Activated CD8-positive, alpha-beta T cell treated with anti-CD3 and anti-CD28 coated beads for 36 hours (primary cell): ENCODE measurements at regions of chr7 and their contacts with region 1.

Region 1: DNA sequence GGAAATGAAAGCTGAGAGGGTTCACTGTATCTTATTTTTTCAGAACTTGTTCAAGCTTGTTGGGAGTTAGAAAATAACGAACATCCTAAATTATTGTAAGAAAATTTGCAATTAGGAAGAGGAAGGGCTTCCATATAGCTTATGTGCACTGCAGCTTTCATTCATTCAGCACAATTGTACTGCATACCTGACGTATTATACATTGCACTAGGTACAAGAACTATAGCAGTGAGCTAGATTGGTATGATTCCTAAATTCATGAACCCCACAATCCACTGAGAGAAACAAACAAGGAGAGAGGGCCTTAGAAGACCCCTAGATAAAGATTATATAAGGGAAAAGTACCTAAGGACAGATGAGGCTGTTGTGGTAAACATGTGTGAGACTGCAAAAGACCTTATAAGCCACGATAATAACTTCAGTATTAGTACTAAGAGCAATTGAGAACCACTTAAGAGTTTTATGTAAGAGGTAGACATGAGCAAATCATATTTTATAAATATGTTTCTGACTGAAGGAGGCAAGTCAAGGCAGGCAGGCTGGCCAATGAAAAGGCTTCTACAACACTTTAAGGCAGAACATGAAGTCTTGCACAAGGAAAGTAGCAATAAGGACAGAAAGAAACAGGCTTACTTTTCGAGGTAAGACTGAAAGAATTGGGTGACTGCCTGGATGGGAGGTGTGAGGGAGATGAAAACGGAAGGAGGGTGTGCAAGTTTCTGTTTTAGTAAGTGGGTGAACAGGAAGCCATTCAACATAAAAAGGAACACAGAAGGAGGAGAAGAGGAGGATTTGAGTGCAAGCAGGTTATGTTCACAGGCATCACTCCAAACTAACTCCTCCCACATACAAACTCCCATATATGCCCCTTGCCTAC is 77.9 kb upstream of the LRRN3 start:
- DNase-seq: peak; percentile 69
- ATAC-seq: peak; percentile 86
- H3K4me3 Mint-ChIP-seq: peak overlapping the region; percentile 66
- H3K27ac Mint-ChIP-seq: peak overlapping the region; percentile 91
- H3K4me1 Mint-ChIP-seq: peaks cover 67% of the 10 kb centered on the region
- H3K27me3 Mint-ChIP-seq: no peaks in the 10 kb centered on the region
- CTCF ChIP-seq: no peak

Region 2: DNA sequence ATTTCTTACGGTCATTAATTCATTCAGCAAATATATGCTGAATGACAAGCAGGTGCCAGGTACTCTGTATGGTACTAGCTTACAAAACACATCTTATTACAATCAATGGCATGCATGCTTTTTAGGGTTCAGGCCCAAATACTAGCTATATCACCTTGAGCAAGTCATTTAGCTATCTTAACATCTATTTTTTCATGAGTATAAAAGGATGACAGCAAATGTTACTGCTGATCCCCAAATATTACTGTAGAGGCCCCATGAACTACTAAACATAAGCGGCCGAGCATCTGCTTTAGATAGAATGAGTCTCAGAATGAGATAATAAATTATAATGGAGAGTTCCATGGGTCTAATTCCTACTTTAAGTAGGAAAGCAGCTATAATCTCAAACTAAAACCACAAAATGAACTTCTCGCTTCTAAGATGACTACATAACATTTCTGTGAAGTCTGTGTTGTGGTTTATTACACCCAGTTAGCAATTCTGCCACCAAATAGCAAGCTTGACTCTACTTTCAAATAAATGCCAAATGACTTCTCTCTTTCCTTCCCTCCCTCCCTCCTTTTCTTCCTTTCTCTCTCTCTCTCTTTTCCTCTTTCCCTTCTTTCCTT is 35.8 kb before region 1 on chr7:
- CTCF ChIA-PET with region 1: no interaction called
- POLR2A ChIA-PET with region 1: no interaction called
- intact Hi-C with region 1: loop called (anchors 2 kb)
- DNase-seq: no peak
- ATAC-seq: peak; percentile 77
- H3K4me3 Mint-ChIP-seq: peak overlapping the region; percentile 48
- H3K27ac Mint-ChIP-seq: peak overlapping the region; percentile 83
- H3K4me1 Mint-ChIP-seq: peaks cover 47% of the 10 kb centered on the region
- H3K27me3 Mint-ChIP-seq: no peaks in the 10 kb centered on the region
- CTCF ChIP-seq: no peak

Region 3: DNA sequence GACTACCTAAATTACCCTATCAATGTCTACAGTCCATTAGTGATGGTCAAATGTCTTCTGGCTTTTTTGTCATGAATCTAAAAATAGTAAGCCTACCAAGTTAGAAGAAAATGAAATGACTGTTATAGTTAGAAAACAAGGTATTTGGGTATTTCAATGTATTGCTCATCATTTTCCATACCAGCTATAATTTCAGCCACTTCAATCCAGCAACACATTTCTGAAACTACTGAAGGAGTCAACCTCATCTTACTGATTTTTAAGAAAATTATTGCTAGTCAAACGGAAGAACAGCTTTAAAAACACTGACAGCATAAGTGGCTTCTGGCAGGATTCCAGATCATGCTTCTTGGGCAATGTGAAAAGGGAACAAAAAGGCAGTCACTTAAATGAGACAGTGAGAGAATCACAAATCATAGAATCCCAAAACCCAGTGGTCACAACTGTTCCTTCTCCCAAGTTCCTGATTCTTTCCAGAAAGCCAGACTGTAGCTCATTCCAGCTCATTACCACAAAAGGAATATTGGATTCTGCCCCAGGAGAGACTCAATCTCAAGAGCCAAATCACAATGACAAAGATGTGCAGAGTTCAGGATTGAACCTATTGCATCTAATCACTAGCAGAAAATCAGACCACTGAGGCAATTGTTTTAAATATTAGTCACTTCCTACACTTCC is 16.7 kb after region 1 on chr7:
- CTCF ChIA-PET with region 1: interaction called, 10 read pairs
- POLR2A ChIA-PET with region 1: interaction called, 13 read pairs
- intact Hi-C with region 1: loop called (anchors 2 kb)
- DNase-seq: peak; percentile 78
- ATAC-seq: peak; percentile 59
- H3K4me3 Mint-ChIP-seq: peak overlapping the region; percentile 44
- H3K27ac Mint-ChIP-seq: peak overlapping the region; percentile 95
- H3K4me1 Mint-ChIP-seq: peaks cover 64% of the 10 kb centered on the region
- H3K27me3 Mint-ChIP-seq: no peaks in the 10 kb centered on the region
- CTCF ChIP-seq: no peak

Region 4: GRCh38 chr7:111083413-111083812 is 70.4 kb after region 1 on chr7:
- CTCF ChIA-PET with region 1: interaction called, 5 read pairs
- POLR2A ChIA-PET with region 1: interaction called, 8 read pairs
- intact Hi-C with region 1: loop called (anchors 2 kb)
- DNase-seq: peak; percentile 73
- ATAC-seq: peak; percentile 77
- H3K4me3 Mint-ChIP-seq: peak overlapping the region; percentile 62
- H3K27ac Mint-ChIP-seq: peak overlapping the region; percentile 97
- H3K4me1 Mint-ChIP-seq: peaks cover 77% of the 10 kb centered on the region
- H3K27me3 Mint-ChIP-seq: no peaks in the 10 kb centered on the region
- CTCF ChIP-seq: no peak

Region 5: DNA sequence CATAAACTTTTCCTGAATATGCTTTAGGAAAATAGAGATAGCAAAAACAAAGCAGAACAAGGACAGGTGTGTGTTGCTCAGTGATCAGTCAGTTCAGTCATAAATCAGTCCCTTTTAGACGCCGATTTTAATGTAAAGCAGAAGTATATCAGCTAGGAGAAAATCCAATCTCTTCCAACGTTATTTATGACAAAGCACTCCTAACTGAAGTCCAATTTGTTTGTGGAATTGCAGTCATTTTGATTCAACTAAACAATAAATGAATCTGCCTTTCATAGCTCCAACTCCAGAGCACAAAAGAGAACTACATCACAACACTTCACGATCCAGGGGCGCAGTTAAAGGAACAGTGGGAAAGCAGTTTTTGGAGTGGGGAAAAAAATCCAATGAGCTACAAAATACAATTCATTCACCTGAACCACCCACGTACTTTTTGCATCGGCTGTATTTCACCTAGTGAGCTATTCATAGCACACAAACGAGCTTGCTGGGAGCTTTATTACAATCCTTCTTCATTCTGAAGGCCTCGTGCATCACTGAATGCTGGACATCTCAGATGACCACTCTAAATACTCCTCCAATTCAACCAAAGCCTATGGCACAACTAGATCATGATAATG is 229.2 kb after region 1 on chr7:
- CTCF ChIA-PET with region 1: no interaction called
- POLR2A ChIA-PET with region 1: no interaction called
- intact Hi-C with region 1: no loop called
- DNase-seq: no peak
- ATAC-seq: no peak
- H3K4me3 Mint-ChIP-seq: no peak overlapping the region
- H3K27ac Mint-ChIP-seq: no peak overlapping the region
- H3K4me1 Mint-ChIP-seq: peaks cover 6% of the 10 kb centered on the region
- H3K27me3 Mint-ChIP-seq: no peaks in the 10 kb centered on the region
- CTCF ChIP-seq: no peak

Region 6: DNA sequence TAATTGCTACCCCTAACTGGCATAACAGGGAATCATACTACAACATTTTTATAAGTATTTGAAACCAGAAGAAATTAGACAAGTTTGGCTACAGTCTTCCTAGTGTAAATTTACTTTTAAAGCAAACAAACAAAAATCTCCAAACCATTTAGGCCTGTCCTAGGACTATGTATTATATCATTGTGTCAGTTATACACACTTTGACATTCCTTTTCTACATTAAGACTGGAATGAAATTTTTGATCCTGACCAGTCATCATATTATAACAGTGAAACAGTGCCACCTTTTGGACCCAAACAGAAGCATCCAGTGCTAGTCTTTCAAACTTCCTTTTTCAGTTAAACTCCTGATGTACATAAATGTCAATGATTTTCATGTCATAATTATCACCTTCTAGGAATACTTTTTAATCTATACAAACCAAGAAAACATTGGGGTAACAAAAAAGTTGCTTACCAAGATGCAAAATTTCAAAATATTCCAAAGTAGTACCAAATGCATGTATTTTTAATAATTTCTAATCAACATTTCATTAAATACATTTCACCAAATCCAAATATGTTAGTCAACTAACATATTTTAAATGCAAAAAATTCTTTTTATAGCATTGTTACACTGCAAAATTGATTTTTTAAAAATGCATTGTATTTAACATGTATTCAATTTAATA is 473.6 kb after region 1 on chr7:
- CTCF ChIA-PET with region 1: no interaction called
- POLR2A ChIA-PET with region 1: no interaction called
- intact Hi-C with region 1: loop called (anchors 10 kb)
- DNase-seq: peak; percentile 5
- ATAC-seq: no peak
- H3K4me3 Mint-ChIP-seq: no peak overlapping the region
- H3K27ac Mint-ChIP-seq: no peak overlapping the region
- H3K4me1 Mint-ChIP-seq: no peaks in the 10 kb centered on the region
- H3K27me3 Mint-ChIP-seq: no peaks in the 10 kb centered on the region
- CTCF ChIP-seq: peak; percentile 81